PC-9 (cell line): ENCODE measurements at regions of chr5 and their contacts with region 1.

Region 1: DNA sequence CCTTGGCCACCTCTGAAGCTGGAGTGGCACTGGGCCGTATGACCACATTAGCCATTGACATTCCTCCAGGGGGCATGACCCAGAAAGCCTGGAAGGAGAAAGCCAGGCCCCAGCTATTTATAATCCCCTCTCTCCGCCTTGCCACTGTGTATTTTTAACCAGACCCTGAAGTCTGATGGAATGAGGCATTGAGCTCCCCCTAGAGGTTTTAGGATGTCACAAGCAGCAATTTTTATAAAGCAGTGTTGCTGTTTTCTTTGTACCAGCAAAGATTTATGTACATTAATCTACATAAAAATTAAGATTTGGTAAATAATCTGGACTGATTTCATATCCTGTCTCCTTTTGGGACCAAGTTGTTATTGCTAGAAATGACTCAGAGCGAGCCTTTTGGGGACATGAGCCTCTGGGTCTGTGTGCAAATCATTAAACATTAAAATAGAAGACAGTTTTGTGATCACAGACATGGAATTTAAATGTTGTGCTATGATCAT is 127.1 kb downstream of the TRIO start:
- DNase-seq: peak; percentile 81 to 86
- H3K4me3 ChIP-seq: 0 out of 2 replicates have a peak overlapping the region, but pooled peaks have one; percentile 8
- H3K27ac ChIP-seq: peak overlapping the region; percentile 88
- H3K4me1 ChIP-seq: peaks cover 57% of the 10 kb centered on the region
- H3K27me3 ChIP-seq: no peaks in the 10 kb centered on the region
- CTCF ChIP-seq: peak; percentile 90

Region 2: GRCh38 chr5:14234219-14234618 is 36.0 kb before region 1 on chr5:
- CTCF ChIA-PET with region 1: interaction called, 8 read pairs
- POLR2A ChIA-PET with region 1: interaction called, 11 read pairs
- intact Hi-C with region 1: loop called (anchors 1 kb)
- DNase-seq: peak; percentile 93
- H3K4me3 ChIP-seq: no peak overlapping the region
- H3K27ac ChIP-seq: peak overlapping the region; percentile 73
- H3K4me1 ChIP-seq: peaks cover 40% of the 10 kb centered on the region
- H3K27me3 ChIP-seq: no peaks in the 10 kb centered on the region
- CTCF ChIP-seq: no peak

Region 3: DNA sequence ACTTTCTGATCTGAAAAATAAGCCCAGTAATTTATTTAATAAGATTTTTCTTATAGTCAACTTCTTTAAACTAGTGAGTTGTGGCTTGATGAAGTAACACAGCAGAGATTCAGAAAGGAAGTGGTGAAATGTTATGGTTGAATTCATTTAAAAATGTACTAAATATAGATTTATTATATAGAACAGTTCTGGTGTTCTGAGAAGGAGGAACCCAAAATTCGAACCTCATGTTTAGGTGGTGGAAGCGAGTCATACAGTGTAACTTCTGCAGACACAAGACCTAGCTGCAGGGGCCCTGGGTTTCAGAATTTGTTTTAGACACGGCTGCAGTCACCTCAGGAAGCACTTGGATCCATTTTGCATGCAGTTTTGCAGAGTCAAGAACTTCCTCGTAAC is 61.1 kb after region 1 on chr5:
- CTCF ChIA-PET with region 1: no interaction called
- POLR2A ChIA-PET with region 1: no interaction called
- intact Hi-C with region 1: no loop called
- DNase-seq: no peak
- H3K4me3 ChIP-seq: no peak overlapping the region
- H3K27ac ChIP-seq: no peak overlapping the region
- H3K4me1 ChIP-seq: no peaks in the 10 kb centered on the region
- H3K27me3 ChIP-seq: no peaks in the 10 kb centered on the region
- CTCF ChIP-seq: no peak

Region 4: DNA sequence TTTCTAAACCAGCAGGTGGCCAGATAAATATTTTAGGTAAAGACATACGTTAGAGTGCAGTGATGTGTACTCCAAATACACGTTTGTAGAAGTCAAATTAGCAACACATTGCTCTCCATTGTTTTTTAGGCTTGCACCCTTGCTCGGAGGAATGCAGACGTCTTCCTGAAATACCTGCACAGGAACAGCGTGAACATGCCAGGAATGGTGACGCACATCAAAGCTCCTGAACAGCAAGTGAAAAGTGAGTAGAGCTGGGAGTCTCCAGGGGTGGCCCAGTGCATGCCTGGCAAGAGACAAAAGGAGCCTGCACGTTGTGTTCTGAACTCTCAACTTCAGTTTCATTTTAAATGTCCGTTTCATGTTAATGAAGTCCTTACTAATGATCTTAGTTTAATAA is 103.8 kb after region 1 on chr5:
- CTCF ChIA-PET with region 1: no interaction called
- POLR2A ChIA-PET with region 1: no interaction called
- intact Hi-C with region 1: no loop called
- DNase-seq: no peak
- H3K4me3 ChIP-seq: no peak overlapping the region
- H3K27ac ChIP-seq: no peak overlapping the region
- H3K4me1 ChIP-seq: no peaks in the 10 kb centered on the region
- H3K27me3 ChIP-seq: no peaks in the 10 kb centered on the region
- CTCF ChIP-seq: no peak